BJ (cell line): ENCODE measurements at regions of chr10 and their contacts with region 1.

Region 1: GRCh38 chr10:104580774-104581675 is 60.1 kb upstream of the SORCS3 start:
- DNase-seq: no peak
- H3K4me3 ChIP-seq: peak overlapping the region; percentile 3; the same call in 1 of the 2 replicates
- H3K27me3 ChIP-seq: no peaks in the 10 kb centered on the region
- CTCF ChIP-seq: peak; percentile 92

Region 2: GRCh38 chr10:104608091-104608828 is 27.2 kb after region 1 on chr10:
- CTCF ChIA-PET with region 1: interaction called, 12 read pairs
- POLR2A ChIA-PET with region 1: no interaction called
- DNase-seq: no peak
- H3K4me3 ChIP-seq: no peak overlapping the region
- H3K27me3 ChIP-seq: no peaks in the 10 kb centered on the region
- CTCF ChIP-seq: no peak

Region 3: DNA sequence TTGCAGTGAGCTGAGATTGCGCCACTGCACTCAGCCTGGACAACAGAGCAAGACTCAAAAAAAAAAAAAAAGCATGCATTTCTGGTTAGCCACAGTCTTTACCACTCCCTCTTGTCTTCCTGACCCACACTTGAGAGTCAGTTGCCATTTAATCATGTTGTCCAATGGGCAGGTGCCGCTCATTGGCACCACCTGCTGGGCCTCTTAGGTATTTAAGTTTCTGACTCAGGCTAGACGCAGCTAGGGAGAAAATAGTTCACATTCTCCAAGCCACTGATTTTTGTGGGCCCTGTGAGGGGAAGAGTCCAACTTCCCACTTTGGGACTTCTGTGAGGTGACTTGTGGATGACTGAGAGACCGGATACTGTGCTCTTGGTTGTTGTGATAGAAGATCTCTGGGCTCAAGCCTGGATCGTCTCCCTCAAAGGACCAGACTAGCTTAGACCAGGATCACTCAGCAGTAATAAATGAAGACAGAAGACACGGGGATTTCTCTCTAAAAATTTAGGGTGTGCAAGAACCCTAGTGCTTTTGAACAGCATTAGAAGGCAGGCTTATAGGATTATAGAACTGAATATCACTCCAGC is 33.3 kb after region 1 on chr10:
- CTCF ChIA-PET with region 1: interaction called, 13 read pairs
- POLR2A ChIA-PET with region 1: no interaction called
- DNase-seq: no peak
- H3K4me3 ChIP-seq: no peak overlapping the region
- H3K27me3 ChIP-seq: no peaks in the 10 kb centered on the region
- CTCF ChIP-seq: peak; percentile 60

Region 4: DNA sequence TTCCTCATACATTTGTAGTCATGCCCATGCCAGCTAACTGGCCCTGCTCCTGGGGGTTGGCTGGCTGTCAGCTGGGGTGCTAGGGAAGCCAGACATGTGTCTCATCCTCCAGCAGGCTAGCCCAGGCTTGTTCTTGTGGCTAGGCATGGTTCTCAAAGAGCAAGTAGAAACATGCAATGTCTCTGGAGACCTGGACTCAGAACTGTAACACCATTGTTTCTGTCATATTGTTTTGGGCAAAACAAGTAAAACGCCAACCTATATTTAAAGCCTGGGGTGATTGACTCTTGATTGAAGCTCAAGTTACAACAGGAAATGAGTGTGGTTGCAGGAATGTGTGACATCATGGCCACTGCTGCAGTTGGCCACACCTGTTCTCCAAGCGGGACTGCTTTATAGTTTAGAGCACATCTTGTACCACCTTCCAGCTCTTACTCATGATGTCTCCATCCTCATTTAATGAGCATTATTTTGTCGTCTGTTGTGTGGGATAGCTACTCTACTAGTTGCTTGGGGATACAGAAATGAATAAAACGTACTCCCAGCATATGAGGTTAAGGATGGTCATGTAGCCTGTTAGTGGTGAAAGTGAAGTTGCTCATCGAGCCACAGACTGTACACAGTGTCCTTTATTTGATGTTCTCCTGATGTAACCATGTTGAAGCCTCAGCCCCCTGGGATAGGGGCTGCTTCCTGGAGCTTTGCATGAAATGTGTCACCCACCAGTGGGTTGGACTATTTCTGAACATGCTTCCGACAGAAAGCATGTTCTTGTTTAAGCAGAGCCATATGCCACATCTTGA is 228.5 kb after region 1 on chr10:
- CTCF ChIA-PET with region 1: no interaction called
- POLR2A ChIA-PET with region 1: no interaction called
- DNase-seq: no peak
- H3K4me3 ChIP-seq: no peak overlapping the region
- H3K27me3 ChIP-seq: no peaks in the 10 kb centered on the region
- CTCF ChIP-seq: no peak